ENCODE measurements at regions of chr18 and their contacts with region 1.

Region 1: DNA sequence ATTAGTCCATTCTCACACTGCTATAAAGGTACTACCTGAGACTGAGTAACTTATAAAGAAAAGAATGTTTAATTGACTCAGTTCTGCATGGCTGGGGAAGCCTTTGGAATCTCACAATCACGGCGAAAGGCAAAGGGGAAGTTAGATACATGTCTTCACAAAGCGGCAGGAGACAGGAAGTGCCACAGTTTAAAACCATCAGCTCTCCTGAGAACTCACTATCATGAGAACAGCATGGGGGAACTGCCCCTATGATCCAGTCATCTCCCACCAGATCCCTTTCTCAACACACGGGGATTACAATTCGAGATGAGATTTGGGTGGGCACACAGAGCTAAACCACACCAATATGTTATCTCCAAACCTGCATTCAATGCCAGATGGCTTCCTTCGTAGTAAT is 716.1 kb downstream of the DCC start:
- DNase-seq: no peak

Region 2: DNA sequence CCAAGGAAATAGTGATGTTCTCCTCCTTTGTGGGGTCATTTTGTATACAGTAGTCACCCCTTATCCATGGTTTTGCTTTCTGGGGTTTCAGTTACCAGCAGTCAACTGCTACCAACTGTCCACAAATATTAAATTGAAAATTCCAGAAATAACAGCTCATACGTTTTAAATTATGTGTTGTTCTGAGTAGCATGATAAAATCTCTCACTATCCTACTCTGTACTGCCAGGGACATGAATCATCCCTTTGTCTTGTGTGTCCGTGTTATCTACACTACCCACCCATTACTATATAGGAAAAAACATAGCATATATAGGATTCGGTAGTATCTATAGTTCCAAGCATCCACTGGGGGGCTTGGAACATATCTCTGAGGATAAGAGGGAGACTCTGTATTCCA is 837.0 kb before region 1 on chr18:
- intact Hi-C with region 1: loop called in 1 of 2 experiments (anchors 5 kb)
- DNase-seq: no peak